KBM-7 (cell line): ENCODE measurements at regions of chr21 and their contacts with region 1.

Region 1: GRCh38 chr21:32403201-32403777 is 9.2 kb upstream of the EVA1C start:
- DNase-seq: peak; percentile 79

Region 2: GRCh38 chr21:32507342-32507919 is 104.1 kb after region 1 on chr21:
- in situ Hi-C with region 1: no loop called
- DNase-seq: no peak

Region 3: DNA sequence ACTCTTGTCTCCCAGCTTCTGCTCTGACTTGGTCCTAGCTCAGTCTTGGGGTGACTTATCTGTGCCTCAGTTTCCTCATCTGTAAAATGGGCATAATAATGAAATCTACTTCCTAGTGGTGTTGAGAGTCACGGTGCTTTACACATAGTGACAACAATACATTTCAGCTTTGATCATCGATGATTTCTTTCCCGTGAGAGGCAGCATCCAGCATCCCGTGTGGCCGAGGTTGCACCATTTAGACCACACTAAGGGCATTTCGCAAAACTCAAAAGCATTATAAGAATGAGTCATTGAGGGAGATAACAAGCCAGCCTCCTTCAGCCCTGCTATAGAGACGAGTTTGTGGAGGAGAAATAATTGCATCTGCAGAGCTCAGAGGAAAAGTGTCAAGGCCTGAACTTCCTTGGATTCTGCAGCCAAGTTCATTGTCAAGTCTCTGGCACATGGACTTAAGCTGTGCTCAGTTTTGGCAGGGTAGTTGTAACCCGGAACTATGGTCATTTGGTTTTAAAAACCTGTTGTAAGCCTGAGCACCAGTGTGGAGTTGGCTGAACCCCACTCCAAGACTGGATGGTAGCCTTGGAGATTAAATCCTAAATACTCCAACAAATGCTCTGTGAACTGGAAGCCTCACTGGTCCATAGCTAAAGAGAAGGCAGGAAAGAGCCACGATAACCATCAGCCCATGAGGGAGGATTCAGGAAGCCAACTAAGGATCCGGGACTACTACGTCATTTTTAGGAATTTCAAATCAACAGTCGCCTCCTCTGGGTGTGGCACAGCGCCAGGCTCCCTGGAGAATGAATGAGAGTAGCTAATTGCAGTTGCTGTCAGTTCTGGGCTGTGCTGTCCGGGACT is 117.8 kb after region 1 on chr21:
- in situ Hi-C with region 1: no loop called
- DNase-seq: no peak

Region 4: GRCh38 chr21:32578107-32578692 is 174.9 kb after region 1 on chr21:
- in situ Hi-C with region 1: loop called (anchors 25 kb)
- DNase-seq: peak; percentile 14